Activated naive CD4-positive, alpha-beta T cell treated with anti-CD3 and anti-CD28 coated beads for 36 hours (primary cell): ENCODE measurements at regions of chr7 and their contacts with region 1.

Region 1: GRCh38 chr7:97027427-97028234 is 3.0 kb upstream of the DLX5 start:
- DNase-seq: peak; percentile 83
- H3K4me3 Mint-ChIP-seq: peak overlapping the region; percentile 56
- H3K27ac Mint-ChIP-seq: no peak overlapping the region
- H3K4me1 Mint-ChIP-seq: peaks cover 44% of the 10 kb centered on the region
- H3K27me3 Mint-ChIP-seq: peaks cover 62% of the 10 kb centered on the region

Region 2: DNA sequence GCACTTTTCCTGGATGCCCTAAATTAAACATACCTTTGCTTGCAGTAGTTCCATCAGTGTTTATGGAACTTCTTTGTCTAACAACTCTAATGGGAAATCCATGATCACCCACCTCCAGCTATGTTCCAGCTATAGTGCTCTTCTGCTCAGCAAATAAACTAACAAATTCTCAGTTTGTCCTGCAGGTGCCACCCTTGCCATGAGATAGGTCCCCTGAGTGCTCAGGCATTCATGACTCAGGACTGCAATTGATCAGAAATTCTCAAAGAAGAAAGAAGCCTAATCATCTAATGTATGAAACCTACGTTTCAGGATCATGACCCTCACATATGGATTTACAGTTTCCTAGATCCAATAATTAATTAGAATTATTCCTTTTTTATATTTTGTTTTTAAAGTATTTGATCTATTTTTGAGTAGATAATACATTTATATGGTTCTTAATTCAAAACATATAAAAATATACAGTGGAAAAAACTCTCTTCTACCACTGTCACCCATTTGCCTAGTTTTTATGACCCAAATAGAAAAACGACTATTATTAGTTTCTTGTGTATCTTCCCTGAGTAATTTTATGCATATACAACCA is 1303.9 kb before region 1 on chr7:
- CTCF ChIA-PET with region 1: no interaction called
- intact Hi-C with region 1: loop called (anchors 10 kb)
- DNase-seq: peak; percentile 29
- H3K4me3 Mint-ChIP-seq: no peak overlapping the region
- H3K27ac Mint-ChIP-seq: no peak overlapping the region
- H3K4me1 Mint-ChIP-seq: no peaks in the 10 kb centered on the region
- H3K27me3 Mint-ChIP-seq: peaks cover 7% of the 10 kb centered on the region

Region 3: DNA sequence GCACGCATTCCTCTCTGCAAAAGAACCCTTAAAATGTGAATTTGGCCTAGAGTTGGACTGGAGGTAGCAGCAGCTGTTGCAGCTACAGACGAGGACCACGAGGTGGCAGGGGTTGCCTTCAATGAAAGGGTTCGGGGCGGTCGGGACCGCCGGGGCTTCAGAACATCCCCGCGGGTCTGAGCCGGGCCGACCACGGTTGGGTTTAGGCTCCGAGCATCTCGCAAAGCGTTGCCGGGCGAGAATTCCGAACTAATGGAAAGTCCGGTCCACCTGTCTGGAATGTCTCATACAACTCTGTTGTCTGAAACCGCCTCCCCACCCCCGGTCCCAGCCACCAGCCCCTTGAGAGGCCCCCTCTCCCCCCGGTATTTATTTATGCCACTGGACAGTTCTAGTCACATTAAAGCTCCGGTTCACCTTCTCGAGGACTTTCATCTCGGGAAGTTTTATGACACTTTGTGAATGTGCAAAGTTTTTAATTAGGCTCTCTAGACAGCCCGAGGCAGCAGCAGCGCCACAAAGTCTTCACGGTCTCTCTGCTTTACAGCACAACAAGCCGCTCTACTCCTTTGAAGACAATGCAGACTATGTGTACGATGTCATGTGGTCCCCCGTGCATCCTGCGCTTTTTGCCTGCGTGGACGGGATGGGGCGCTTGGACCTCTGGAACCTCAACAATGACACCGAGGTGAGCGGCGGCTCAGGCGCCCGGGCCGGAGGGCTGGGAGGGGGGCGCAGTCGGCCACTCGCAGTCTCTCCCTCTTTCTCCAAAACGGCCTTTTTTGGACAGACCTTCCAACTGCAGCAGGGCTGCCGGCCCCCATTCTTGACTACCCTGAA is 951.9 kb before region 1 on chr7:
- CTCF ChIA-PET with region 1: interaction called, 13 read pairs
- intact Hi-C with region 1: loop called (anchors 1 kb)
- DNase-seq: peak; percentile 58
- H3K4me3 Mint-ChIP-seq: peak overlapping the region; percentile 71
- H3K27ac Mint-ChIP-seq: no peak overlapping the region
- H3K4me1 Mint-ChIP-seq: peaks cover 2% of the 10 kb centered on the region
- H3K27me3 Mint-ChIP-seq: peaks cover 30% of the 10 kb centered on the region

Region 4: GRCh38 chr7:96224685-96225084 is 802.9 kb before region 1 on chr7:
- CTCF ChIA-PET with region 1: no interaction called
- intact Hi-C with region 1: loop called (anchors 2 kb)
- DNase-seq: peak; percentile 24
- H3K4me3 Mint-ChIP-seq: no peak overlapping the region
- H3K27ac Mint-ChIP-seq: no peak overlapping the region
- H3K4me1 Mint-ChIP-seq: peaks cover 4% of the 10 kb centered on the region
- H3K27me3 Mint-ChIP-seq: no peaks in the 10 kb centered on the region

Region 5: GRCh38 chr7:96596120-96596826 is 431.4 kb before region 1 on chr7:
- CTCF ChIA-PET with region 1: interaction called, 4 read pairs
- intact Hi-C with region 1: loop called (anchors 2 kb)
- DNase-seq: no peak
- H3K4me3 Mint-ChIP-seq: no peak overlapping the region
- H3K27ac Mint-ChIP-seq: no peak overlapping the region
- H3K4me1 Mint-ChIP-seq: no peaks in the 10 kb centered on the region
- H3K27me3 Mint-ChIP-seq: peaks cover 10% of the 10 kb centered on the region

Region 6: GRCh38 chr7:96685353-96685752 is 342.3 kb before region 1 on chr7:
- CTCF ChIA-PET with region 1: no interaction called
- intact Hi-C with region 1: no loop called
- DNase-seq: no peak
- H3K4me3 Mint-ChIP-seq: no peak overlapping the region
- H3K27ac Mint-ChIP-seq: no peak overlapping the region
- H3K4me1 Mint-ChIP-seq: peaks cover 22% of the 10 kb centered on the region
- H3K27me3 Mint-ChIP-seq: no peaks in the 10 kb centered on the region

Region 7: GRCh38 chr7:96993094-96993865 is 34.4 kb before region 1 on chr7:
- CTCF ChIA-PET with region 1: interaction called, 4 read pairs
- intact Hi-C with region 1: loop called (anchors 5 kb)
- DNase-seq: no peak
- H3K4me3 Mint-ChIP-seq: no peak overlapping the region
- H3K27ac Mint-ChIP-seq: no peak overlapping the region
- H3K4me1 Mint-ChIP-seq: peaks cover 13% of the 10 kb centered on the region
- H3K27me3 Mint-ChIP-seq: peaks cover 82% of the 10 kb centered on the region

Region 8: DNA sequence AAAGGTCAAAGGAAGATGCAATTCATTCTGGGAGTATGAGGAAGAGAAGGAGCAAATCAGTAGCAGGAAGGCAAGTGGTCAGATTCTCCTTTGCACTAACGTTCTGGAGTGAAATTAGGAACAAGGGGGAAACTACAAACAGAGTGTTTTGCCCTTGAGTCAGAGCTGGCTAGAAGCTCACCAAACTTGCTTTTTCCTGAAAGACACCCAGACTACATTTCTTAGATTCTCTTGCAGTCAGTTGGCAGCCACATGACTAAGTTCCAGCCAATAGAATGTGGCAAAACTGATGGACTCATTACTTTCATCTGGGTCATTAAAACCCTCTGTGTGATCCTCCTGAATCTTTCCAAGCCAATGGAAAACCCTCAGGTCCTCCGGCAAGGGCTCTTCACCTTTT is 15.7 kb after region 1 on chr7:
- CTCF ChIA-PET with region 1: no interaction called
- intact Hi-C with region 1: no loop called
- DNase-seq: no peak
- H3K4me3 Mint-ChIP-seq: no peak overlapping the region
- H3K27ac Mint-ChIP-seq: no peak overlapping the region
- H3K4me1 Mint-ChIP-seq: no peaks in the 10 kb centered on the region
- H3K27me3 Mint-ChIP-seq: peaks cover 52% of the 10 kb centered on the region